Activated CD8-positive, alpha-beta T cell treated with anti-CD3 and anti-CD28 coated beads, Interleukin-2, amount 10 ng/mL, durations not matched to agents 7 days and 5 days (primary cell): ENCODE measurements at regions of chr20 and their contacts with region 1.

Region 1: GRCh38 chr20:1392823-1393506 is at the start of gene FKBP1A:
- DNase-seq: peak; percentile 93
- ATAC-seq: peak; percentile 84
- H3K4me3 Mint-ChIP-seq: peak within 1 kb of the TSS; percentile 88
- H3K27ac Mint-ChIP-seq: peak within 1 kb of the TSS; percentile 91
- H3K4me1 Mint-ChIP-seq: peaks cover 71% of the 10 kb centered on the region
- H3K27me3 Mint-ChIP-seq: peaks cover 18% of the 10 kb centered on the region
- total RNA-seq, gene FKBP1A: 288 to 291 TPM

Region 2: DNA sequence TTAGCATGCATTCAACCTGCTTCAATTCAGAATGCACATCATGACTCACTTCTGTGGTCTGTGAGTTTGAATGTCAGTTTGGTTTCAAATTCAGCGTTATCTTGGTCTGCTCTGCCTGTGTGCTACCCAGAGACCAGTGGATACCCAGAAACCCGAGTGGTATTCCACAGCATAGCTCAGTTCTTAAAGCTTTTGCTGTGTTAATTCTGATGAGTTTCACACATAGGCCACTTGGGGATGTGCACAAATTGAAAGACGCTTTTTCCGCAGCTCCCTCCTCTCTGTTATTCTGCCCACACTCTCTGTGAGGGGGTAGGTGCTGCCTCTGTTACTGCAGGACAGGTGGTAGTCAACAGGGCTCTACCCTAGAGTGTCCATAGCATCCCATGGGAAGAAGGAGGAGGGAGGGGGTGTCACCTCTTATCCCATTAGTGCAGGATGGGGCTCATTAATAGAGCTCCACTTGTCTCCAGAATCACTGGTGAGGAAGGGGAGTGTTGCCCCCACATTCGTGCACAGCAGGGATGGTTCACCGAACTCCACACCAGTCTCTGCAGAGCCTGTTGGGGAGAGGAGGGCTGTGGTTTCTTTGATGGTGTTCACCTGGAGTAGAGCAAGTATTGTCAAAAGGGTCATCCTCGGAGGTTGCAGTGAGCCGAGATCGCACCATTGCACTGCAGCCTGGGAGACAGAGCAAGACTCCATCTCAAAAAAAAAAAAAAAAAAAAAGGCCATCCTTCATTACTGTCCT is 34.9 kb before region 1 on chr20:
- CTCF ChIA-PET with region 1: interaction called, 20 read pairs
- POLR2A ChIA-PET with region 1: interaction called, 10 read pairs
- DNase-seq: peak; percentile 77
- ATAC-seq: peak; percentile 90
- H3K4me3 Mint-ChIP-seq: peak overlapping the region; percentile 64
- H3K27ac Mint-ChIP-seq: peak overlapping the region; percentile 92
- H3K4me1 Mint-ChIP-seq: peaks cover 61% of the 10 kb centered on the region
- H3K27me3 Mint-ChIP-seq: no peaks in the 10 kb centered on the region

Region 3: DNA sequence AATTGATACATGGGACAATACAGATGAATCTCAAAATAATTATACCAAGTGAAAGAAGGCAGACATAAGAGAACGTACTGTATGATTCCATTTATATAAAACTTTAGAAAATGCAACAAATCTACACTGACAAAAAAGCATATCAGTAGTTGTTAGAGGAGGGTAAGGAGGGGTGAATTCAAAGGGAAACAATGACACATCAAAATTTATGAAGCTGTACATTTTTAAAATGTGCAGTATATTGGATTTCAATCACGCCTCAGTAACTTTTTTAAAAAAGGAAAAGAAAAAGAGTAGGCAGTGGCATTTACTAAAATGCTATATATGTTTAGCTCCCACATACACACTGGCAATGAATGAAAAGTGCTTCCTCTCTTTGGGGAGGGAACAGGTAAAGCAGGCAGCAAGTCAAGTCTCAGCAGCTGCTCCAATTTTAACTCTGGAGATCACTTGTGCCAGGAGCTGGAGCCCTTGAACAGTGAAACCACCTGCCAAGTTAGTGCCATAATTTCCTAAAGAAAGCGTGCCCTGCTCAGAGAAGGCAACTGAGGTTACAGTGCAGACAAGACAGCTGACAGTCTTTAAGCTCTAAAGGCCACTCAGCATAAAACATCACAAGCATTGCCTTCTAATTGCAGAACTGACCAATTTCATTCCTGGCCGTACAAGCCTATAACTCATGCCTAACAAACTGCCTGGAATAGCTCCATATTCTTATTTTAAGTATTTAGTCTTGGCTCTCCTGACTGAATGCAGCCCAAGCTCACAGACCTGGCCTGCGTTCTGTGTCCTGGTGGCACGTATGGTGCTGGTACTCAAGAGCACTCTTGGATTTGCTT is 11.0 kb before region 1 on chr20:
- CTCF ChIA-PET with region 1: interaction called, 15 read pairs
- POLR2A ChIA-PET with region 1: interaction called, 7 read pairs
- DNase-seq: no peak
- ATAC-seq: no peak
- H3K4me3 Mint-ChIP-seq: no peak overlapping the region
- H3K27ac Mint-ChIP-seq: no peak overlapping the region
- H3K4me1 Mint-ChIP-seq: peaks cover 92% of the 10 kb centered on the region
- H3K27me3 Mint-ChIP-seq: no peaks in the 10 kb centered on the region

Region 4: GRCh38 chr20:1405801-1406200 is 12.8 kb after region 1 on chr20:
- CTCF ChIA-PET with region 1: no interaction called
- POLR2A ChIA-PET with region 1: no interaction called
- DNase-seq: peak; percentile 0
- ATAC-seq: no peak
- H3K4me3 Mint-ChIP-seq: no peak overlapping the region
- H3K27ac Mint-ChIP-seq: no peak overlapping the region
- H3K4me1 Mint-ChIP-seq: peaks cover 11% of the 10 kb centered on the region
- H3K27me3 Mint-ChIP-seq: peaks cover 26% of the 10 kb centered on the region